IMR-90 (cell line): ENCODE measurements at regions of chr1 and their contacts with region 1.

Region 1: GRCh38 chr1:228082135-228082891 is at the start of gene ARF1:
- DNase-seq: peak; percentile 92
- ATAC-seq: peak; percentile 89
- H3K4me3 ChIP-seq: peak within 1 kb of the TSS; percentile 100
- H3K27ac ChIP-seq: peak within 1 kb of the TSS; percentile 99
- H3K4me1 ChIP-seq: peaks cover 18% of the 10 kb centered on the region
- H3K27me3 ChIP-seq: no peaks in the 10 kb centered on the region
- CTCF ChIP-seq: no peak
- POLR2A ChIP-seq: peak; percentile 97
- RAD21 ChIP-seq: no peak
- total RNA-seq, gene ARF1: 306 and 330 TPM in 2 replicates

Region 2: GRCh38 chr1:227489572-227489971 is 592.7 kb before region 1 on chr1:
- CTCF ChIA-PET with region 1: no interaction called
- POLR2A ChIA-PET with region 1: no interaction called
- dilution Hi-C with region 1: no loop called
- in situ Hi-C with region 1: no loop called
- intact Hi-C with region 1: loop called (anchors 10 kb)
- DNase-seq: no peak
- ATAC-seq: no peak
- H3K4me3 ChIP-seq: no peak overlapping the region
- H3K27ac ChIP-seq: no peak overlapping the region
- H3K4me1 ChIP-seq: no peaks in the 10 kb centered on the region
- H3K27me3 ChIP-seq: peaks cover 2% of the 10 kb centered on the region
- CTCF ChIP-seq: no peak
- POLR2A ChIP-seq: no peak
- RAD21 ChIP-seq: no peak

Region 3: DNA sequence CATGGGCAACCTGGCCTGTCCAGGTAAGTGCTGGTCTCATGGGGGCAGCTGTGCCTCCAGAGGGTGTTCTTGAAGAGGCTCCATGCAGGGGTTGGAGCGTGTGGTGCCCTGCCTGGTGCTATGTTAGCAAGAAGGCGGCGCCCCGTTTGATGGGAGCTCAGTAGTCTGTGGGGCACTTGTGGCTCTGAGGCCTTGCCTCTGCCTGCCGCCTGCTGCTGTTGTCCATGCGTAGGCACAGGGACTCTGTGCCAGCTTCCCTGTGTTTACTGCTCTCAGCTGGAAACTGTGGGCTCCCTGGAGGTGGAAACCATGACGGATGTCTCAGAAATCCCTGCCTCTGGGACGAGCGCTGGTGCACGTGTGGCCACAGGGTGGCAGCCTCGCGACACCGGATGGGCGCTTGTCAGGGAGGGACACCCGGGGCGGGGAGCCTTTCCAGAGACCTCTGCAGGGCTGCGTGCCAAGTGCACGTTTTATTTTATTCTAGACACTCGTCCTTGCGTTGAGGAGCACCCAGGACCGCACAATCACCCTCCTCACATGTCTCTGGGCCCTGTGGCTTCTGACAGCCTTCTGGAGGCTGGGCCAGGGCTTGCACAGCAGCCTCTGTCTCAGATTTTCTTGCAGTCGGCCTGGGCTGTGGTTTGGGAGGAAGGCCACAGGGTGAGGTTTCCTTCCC is 319.9 kb before region 1 on chr1:
- CTCF ChIA-PET with region 1: no interaction called
- POLR2A ChIA-PET with region 1: no interaction called
- dilution Hi-C with region 1: no loop called
- in situ Hi-C with region 1: loop called (anchors 10 kb)
- intact Hi-C with region 1: loop called (anchors 5 kb)
- DNase-seq: peak; percentile 69
- ATAC-seq: peak; percentile 74
- H3K4me3 ChIP-seq: no peak overlapping the region
- H3K27ac ChIP-seq: peak overlapping the region; percentile 7; the same call in 1 of the 2 replicates
- H3K4me1 ChIP-seq: peaks cover 38% of the 10 kb centered on the region
- H3K27me3 ChIP-seq: no peaks in the 10 kb centered on the region
- CTCF ChIP-seq: peak; percentile 92
- POLR2A ChIP-seq: no peak
- RAD21 ChIP-seq: peak; percentile 93

Region 4: DNA sequence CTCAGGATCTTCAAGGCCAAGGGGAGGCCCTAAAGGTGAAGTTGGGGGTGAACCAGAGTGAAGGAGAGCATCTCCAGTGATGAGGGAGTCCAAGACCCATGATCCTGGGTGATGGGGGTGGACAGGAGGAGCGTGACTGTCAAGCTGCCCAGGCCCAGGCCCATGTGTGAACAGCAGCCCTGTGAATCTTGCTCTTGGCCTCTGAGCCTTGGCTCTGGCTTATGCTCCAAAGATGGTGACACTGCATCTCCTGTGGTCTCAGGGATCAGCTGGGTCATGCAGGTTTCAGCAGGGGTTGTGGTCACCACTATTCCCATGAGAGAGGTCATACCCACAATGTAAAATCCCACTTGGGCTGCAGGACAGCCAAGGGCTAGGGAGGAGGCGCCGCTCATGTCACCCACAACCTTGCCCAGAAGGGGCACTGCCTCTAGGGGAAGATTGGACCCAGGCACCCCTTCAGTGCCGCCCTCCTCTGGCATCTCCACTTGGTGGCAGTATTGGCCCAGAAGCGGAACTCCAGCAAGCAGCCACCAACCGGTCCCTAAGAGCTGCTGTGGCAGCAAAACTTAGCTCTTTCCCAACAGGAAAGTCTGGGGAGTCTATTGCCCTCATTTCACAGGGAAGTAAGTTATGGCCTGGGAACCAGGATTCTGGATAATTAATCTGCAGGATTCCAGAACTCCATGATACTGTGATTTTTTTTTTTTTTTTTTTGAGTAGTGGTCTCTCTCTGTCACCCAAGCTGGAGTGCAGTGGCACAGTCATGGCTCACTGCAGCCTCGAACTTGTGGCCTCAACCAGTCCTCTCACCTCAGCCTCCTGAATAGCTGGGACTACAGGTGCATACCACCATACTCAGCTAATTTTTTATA is 83.0 kb before region 1 on chr1:
- CTCF ChIA-PET with region 1: no interaction called
- POLR2A ChIA-PET with region 1: no interaction called
- dilution Hi-C with region 1: no loop called
- in situ Hi-C with region 1: no loop called
- intact Hi-C with region 1: loop called (anchors 5 kb)
- DNase-seq: peak; percentile 57
- ATAC-seq: peak; percentile 98
- H3K4me3 ChIP-seq: no peak overlapping the region
- H3K27ac ChIP-seq: no peak overlapping the region
- H3K4me1 ChIP-seq: no peaks in the 10 kb centered on the region
- H3K27me3 ChIP-seq: peaks cover 28% of the 10 kb centered on the region
- CTCF ChIP-seq: peak; percentile 85
- POLR2A ChIP-seq: no peak
- RAD21 ChIP-seq: peak; percentile 84

Region 5: DNA sequence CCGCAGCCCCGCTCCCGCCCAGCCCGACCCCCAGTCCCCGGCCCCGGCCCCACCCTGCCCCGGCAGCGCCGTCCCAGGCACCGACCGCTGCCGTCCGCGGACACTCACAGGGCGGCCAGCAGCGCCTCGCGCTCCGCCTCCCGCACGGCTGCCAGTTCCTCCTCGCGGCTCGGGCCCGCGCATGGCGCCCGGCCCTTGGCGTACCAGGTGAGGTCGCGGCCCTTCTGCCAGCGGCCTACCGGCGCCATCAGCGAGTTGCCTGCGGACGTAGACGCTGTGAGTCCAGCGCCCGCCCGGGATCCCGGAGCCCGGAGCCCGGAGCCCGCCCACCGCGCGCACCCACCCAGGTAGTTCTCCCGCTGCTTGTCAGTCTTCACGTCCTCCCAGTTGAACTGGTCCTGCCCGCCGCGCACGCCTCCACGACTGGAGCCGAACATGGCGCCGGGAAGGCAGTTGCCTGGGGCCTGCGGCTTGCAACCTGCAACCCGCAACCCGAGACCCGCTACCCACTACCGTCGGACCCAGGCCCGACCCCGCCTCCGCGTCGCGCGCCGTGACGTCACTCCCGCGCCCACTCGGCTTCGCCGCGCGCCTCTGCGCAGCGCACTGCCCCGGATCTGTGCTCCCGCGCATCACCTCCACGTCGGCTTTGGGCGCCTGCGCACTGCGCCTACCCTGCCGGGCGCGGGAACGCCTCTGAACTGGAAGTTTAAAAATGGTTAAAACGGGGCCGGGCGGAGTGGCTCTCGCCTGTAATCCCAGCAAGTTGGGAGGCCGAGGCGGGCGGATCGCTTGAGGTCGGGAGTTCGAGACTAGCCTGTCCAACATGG is 20.7 kb after region 1 on chr1 and contains the start of gene C1orf35:
- CTCF ChIA-PET with region 1: no interaction called
- POLR2A ChIA-PET with region 1: no interaction called
- dilution Hi-C with region 1: no loop called
- in situ Hi-C with region 1: no loop called
- intact Hi-C with region 1: loop called (anchors 2 kb)
- DNase-seq: peak; percentile 88
- ATAC-seq: peak; percentile 92
- H3K4me3 ChIP-seq: peak within 1 kb of the TSS; percentile 62
- H3K27ac ChIP-seq: peak within 1 kb of the TSS; percentile 49; the same call in 1 of the 2 replicates
- H3K4me1 ChIP-seq: peaks cover 7% of the 10 kb centered on the region; the same call in 1 of the 2 replicates
- H3K27me3 ChIP-seq: no peaks in the 10 kb centered on the region
- CTCF ChIP-seq: no peak
- POLR2A ChIP-seq: no peak
- RAD21 ChIP-seq: no peak
- total RNA-seq, gene C1orf35: 4.3 and 4.7 TPM in 2 replicates

Region 6: GRCh38 chr1:228210076-228210651 is 127.9 kb after region 1 on chr1:
- CTCF ChIA-PET with region 1: no interaction called
- POLR2A ChIA-PET with region 1: no interaction called
- dilution Hi-C with region 1: no loop called
- in situ Hi-C with region 1: no loop called
- intact Hi-C with region 1: no loop called
- DNase-seq: no peak
- ATAC-seq: no peak
- H3K4me3 ChIP-seq: no peak overlapping the region
- H3K27ac ChIP-seq: no peak overlapping the region
- H3K4me1 ChIP-seq: peaks cover 8% of the 10 kb centered on the region; the same call in 1 of the 2 replicates
- H3K27me3 ChIP-seq: no peaks in the 10 kb centered on the region; the same call in 1 of the 2 replicates
- CTCF ChIP-seq: no peak
- POLR2A ChIP-seq: no peak
- RAD21 ChIP-seq: no peak